Naive thymus-derived CD4-positive, alpha-beta T cell (primary cell): ENCODE measurements at regions of chr10 and their contacts with region 1.

Region 1: GRCh38 chr10:119650692-119651513 is at the start of gene BAG3:
- DNase-seq: peak; percentile 50 to 84 (median 67)
- ATAC-seq: peak; percentile 88
- H3K4me3 ChIP-seq: peak within 1 kb of the TSS; percentile 83
- H3K4me3 Mint-ChIP-seq: peak within 1 kb of the TSS; percentile 93 to 100 (median 97)
- H3K27ac ChIP-seq: peak within 1 kb of the TSS; percentile 93
- H3K27ac Mint-ChIP-seq: peak within 1 kb of the TSS; percentile 91 to 99 (median 97)
- H3K4me1 ChIP-seq: peaks cover 20 to 29% of the 10 kb centered on the region in 2 donors
- H3K4me1 Mint-ChIP-seq: peaks cover 29 to 48% (median 44%) of the 10 kb centered on the region in 7 donors
- H3K27me3 ChIP-seq: no peaks in the 10 kb centered on the region
- H3K27me3 Mint-ChIP-seq: peaks cover 0 to 2% (median 0%) of the 10 kb centered on the region in 5 donors
- total RNA-seq, gene BAG3: 21.9 to 44.5 (median 23.1) TPM

Region 2: DNA sequence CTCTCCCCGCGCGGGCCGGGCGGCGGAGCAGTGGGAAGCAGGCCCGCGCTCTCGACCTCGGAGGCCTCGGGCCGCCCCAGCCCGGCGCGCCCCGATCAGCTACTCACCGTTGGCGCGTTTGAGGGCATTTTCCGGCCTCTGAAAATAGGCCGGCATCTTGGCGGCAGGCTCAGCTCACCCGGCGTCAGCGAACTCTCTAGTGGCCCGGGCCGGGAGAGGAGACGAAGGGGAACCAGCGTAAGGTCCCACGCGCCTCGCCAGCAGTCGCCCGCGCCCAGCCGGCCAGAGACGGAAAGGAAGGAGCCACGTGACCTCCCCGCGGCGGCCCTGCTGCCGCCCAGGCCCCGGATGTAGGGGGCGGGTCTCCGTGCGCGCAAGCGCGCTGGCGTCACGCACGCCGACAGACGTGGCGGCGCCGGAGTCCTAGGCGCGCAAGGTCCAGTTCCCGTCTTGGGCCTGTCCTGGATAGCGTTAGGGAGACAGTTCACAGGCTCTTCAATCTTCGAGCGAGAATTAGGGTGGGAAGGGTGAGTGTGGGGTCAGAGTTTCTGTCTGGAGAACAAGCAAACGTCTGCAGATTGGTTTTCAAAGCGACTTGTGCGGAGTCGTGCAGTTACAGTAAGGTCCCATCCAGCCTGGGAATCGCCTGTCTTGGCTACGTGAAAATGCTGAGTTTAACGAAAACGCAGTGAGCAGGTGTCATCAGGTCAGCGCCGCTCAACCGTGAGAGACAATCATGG is 570.2 kb before region 1 on chr10 and contains the start of gene EIF3A:
- CTCF ChIA-PET with region 1: no interaction called
- POLR2A ChIA-PET with region 1: no interaction called
- intact Hi-C with region 1: loop called (anchors 1 to 5 kb)
- DNase-seq: peak; percentile 87 to 98 (median 93)
- ATAC-seq: peak; percentile 90
- H3K4me3 ChIP-seq: peak within 1 kb of the TSS; percentile 83
- H3K4me3 Mint-ChIP-seq: peak within 1 kb of the TSS; percentile 86 to 99 (median 98)
- H3K27ac ChIP-seq: peak within 1 kb of the TSS; percentile 91
- H3K27ac Mint-ChIP-seq: peak within 1 kb of the TSS; percentile 93 to 100 (median 98)
- H3K4me1 ChIP-seq: peaks cover 6 to 26% of the 10 kb centered on the region in 2 donors
- H3K4me1 Mint-ChIP-seq: peaks cover 28 to 55% (median 45%) of the 10 kb centered on the region in 7 donors
- H3K27me3 ChIP-seq: no peaks in the 10 kb centered on the region
- H3K27me3 Mint-ChIP-seq: peaks cover 0 to 2% (median 0%) of the 10 kb centered on the region in 5 donors
- total RNA-seq, gene EIF3A: 87.8 to 137 (median 96.0) TPM

Region 3: DNA sequence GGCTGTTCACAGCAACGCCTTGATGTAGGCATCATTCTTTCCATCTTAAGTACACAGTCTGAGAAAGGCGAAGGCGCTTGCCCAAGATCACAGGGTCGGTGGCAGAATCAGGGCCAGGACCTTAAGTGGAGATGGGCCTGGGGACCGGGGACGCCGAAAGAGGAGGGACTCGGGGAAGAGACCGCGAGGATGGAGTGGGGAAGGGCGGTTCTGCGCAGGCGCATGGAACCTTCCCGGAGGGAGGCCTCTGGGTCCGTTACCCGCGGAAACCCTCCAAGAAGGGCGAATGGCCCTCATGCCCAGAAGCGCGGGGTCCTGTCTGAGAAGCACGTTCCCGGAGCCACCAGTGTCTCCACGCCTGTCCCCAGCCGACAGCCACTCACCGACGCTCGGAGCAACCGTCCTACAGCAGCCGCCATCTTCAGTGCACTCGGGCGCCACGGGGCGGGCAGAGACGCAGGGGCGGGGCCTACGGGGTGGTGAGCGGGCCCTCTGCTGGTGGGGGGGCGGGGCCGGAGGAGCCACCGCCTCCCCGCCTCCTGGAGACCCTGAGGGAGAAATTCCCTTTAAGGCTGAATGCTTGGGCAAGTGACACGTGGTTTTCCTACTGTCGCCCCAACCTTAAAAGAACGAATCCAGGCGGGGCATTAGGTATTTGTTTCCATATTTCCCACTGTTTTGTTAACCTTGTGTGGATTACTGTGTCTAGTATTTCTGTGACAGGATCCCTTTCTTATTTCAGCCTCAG is 472.4 kb before region 1 on chr10 and contains the start of gene PRDX3:
- CTCF ChIA-PET with region 1: no interaction called
- POLR2A ChIA-PET with region 1: no interaction called
- intact Hi-C with region 1: loop called in 1 of 2 experiments (anchors 1 kb)
- DNase-seq: peak; percentile 81 to 96 (median 89)
- ATAC-seq: peak; percentile 100
- H3K4me3 ChIP-seq: peak within 1 kb of the TSS; percentile 97
- H3K4me3 Mint-ChIP-seq: peak within 1 kb of the TSS; percentile 91 to 99 (median 96)
- H3K27ac ChIP-seq: peak within 1 kb of the TSS; percentile 79
- H3K27ac Mint-ChIP-seq: peak within 1 kb of the TSS; percentile 86 to 98 (median 93)
- H3K4me1 ChIP-seq: peaks cover 7 to 13% of the 10 kb centered on the region in 2 donors
- H3K4me1 Mint-ChIP-seq: peaks cover 13 to 48% (median 36%) of the 10 kb centered on the region in 7 donors
- H3K27me3 ChIP-seq: no peaks in the 10 kb centered on the region
- H3K27me3 Mint-ChIP-seq: no peaks in the 10 kb centered on the region
- total RNA-seq, gene PRDX3: 11.7 to 120 (median 35.4) TPM

Region 4: DNA sequence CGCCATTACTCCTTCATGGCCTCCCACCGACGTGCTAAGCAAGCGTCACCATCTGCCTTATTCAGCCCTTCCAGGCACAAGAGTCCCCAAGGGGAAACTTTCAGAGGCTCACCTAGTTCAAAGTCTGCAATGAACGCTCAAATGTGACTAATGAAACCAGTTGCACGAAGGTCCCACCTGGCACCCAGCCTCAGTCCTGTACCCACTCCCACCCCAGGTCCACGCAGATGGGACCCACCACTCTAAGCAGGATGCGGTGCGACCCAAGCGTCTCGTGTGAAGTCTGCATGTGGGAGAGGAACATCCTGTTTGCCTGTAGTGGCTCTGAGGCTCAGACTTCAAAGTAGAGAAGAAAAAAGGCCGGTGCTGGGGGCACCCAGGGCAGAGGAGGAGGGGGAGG is 148.7 kb before region 1 on chr10:
- CTCF ChIA-PET with region 1: no interaction called
- POLR2A ChIA-PET with region 1: no interaction called
- intact Hi-C with region 1: loop called (anchors 1 to 5 kb)
- DNase-seq: peak; percentile 50 to 93 (median 91)
- ATAC-seq: peak; percentile 91
- H3K4me3 ChIP-seq: peak overlapping the region; percentile 46
- H3K4me3 Mint-ChIP-seq: peak overlapping the region; percentile 70 to 85 (median 82)
- H3K27ac ChIP-seq: peak overlapping the region; percentile 98
- H3K27ac Mint-ChIP-seq: peak overlapping the region; percentile 95 to 100 (median 99)
- H3K4me1 ChIP-seq: peaks cover 39 to 88% of the 10 kb centered on the region in 2 donors
- H3K4me1 Mint-ChIP-seq: peaks cover 56 to 98% (median 92%) of the 10 kb centered on the region in 7 donors
- H3K27me3 ChIP-seq: no peaks in the 10 kb centered on the region
- H3K27me3 Mint-ChIP-seq: no peaks in the 10 kb centered on the region

Region 5: DNA sequence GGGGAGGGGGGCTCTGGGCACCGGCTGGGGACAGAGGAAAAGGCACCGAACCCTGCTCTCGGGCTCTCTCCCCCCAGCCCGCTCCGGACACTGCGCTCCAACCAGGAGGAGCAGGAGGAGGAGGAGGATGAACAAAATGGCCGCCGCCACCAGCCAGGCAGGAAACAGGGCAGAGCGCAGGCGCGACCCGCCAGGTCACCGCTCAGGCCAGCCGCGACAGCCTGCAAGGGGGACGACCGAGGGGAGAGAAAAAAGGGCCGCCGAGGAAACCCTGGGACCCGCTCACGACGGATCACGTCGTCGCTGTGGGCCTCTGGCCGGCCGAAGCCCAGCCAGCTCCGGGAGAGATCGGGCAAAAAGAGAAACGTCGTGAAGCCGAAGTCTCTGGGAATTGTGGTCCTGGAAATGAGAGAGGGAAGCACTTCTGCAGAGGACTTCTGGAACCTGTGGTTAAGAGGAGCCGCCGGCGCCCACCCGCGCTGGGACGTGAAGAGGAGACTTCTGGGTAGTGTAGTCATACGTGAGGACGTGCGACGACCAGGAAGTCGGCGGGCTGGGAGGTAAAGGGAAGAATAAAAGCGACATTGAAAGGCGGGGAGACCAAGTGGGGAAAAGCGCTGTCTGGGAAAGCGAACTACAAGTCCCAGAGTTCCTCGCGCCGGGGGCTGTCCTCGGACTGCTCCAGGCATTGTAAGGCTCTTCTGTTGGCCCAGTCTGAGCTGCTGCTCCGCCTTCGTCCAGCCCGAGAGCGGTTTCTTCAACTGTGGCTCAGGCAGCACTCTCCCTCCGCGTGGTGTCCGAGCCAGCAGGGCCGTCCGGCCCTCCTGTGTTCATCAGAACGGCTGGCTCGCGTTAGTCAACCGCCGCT is 54.1 kb before region 1 on chr10 and contains the start of gene TIAL1:
- CTCF ChIA-PET with region 1: interaction called, 3 read pairs
- POLR2A ChIA-PET with region 1: interaction called, 4 read pairs
- intact Hi-C with region 1: loop called (anchors 1 kb)
- DNase-seq: peak; percentile 73 to 95 (median 89)
- ATAC-seq: peak; percentile 88
- H3K4me3 ChIP-seq: peak within 1 kb of the TSS; percentile 96
- H3K4me3 Mint-ChIP-seq: peak within 1 kb of the TSS; percentile 85 to 99 (median 96)
- H3K27ac ChIP-seq: peak within 1 kb of the TSS; percentile 98
- H3K27ac Mint-ChIP-seq: peak within 1 kb of the TSS; percentile 90 to 99 (median 96)
- H3K4me1 ChIP-seq: peaks cover 28 to 38% of the 10 kb centered on the region in 2 donors
- H3K4me1 Mint-ChIP-seq: peaks cover 35 to 56% (median 48%) of the 10 kb centered on the region in 7 donors
- H3K27me3 ChIP-seq: no peaks in the 10 kb centered on the region
- H3K27me3 Mint-ChIP-seq: no peaks in the 10 kb centered on the region
- total RNA-seq, gene TIAL1: 166 to 228 (median 176) TPM

Region 6: GRCh38 chr10:119663866-119664616 is 13.1 kb after region 1 on chr10:
- CTCF ChIA-PET with region 1: interaction called, 4 read pairs
- POLR2A ChIA-PET with region 1: interaction called, 34 read pairs
- intact Hi-C with region 1: loop called (anchors 1 kb)
- DNase-seq: peak in 6 of 9 donors; percentile 34 to 55 (median 50)
- ATAC-seq: peak; percentile 85
- H3K4me3 ChIP-seq: peak overlapping the region; percentile 7
- H3K4me3 Mint-ChIP-seq: peak overlapping the region; percentile 53 to 79 (median 70)
- H3K27ac ChIP-seq: peak overlapping the region; percentile 65
- H3K27ac Mint-ChIP-seq: peak overlapping the region; percentile 83 to 96 (median 89)
- H3K4me1 ChIP-seq: peaks cover 15 to 37% of the 10 kb centered on the region in 2 donors
- H3K4me1 Mint-ChIP-seq: peaks cover 40 to 93% (median 84%) of the 10 kb centered on the region in 7 donors
- H3K27me3 ChIP-seq: no peaks in the 10 kb centered on the region
- H3K27me3 Mint-ChIP-seq: no peaks in the 10 kb centered on the region

Region 7: DNA sequence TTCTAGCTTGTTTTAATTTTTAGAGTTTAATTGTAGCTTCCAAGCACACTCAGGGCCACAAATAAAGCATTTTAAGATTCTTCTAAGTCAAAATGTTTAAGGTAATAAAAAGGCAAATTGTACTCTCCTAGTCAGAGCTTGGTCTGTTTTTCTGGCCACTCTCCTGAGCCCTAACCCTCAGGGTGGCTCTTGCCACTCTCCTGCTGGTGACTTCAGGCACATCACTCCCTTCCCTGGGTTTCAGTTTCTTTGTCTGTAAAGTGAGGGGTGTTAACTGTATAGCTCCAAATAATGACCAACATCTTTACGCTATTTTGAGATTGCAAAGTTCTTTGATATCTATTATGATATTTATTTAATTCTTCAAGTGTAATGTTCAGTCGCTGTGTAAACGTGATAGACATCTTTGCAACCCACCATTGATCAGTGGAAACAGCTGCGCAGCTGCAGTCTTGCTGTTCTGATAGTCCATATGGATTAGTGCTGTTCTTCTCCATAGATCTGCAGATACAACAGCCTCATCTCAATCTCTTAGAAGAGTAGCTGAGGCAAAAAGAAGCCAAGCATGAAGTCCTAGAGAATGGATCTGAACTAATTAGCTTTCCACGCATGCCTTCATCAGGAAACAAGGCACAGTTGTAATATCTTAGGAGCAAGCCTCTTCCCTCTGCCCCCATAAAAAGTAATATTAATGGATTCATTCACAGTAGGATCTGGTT is 996.0 kb after region 1 on chr10:
- CTCF ChIA-PET with region 1: no interaction called
- POLR2A ChIA-PET with region 1: no interaction called
- intact Hi-C with region 1: no loop called
- DNase-seq: no peak
- ATAC-seq: no peak
- H3K4me3 ChIP-seq: no peak overlapping the region
- H3K4me3 Mint-ChIP-seq: no peak overlapping the region
- H3K27ac ChIP-seq: no peak overlapping the region
- H3K27ac Mint-ChIP-seq: no peak overlapping the region
- H3K4me1 ChIP-seq: no peaks in the 10 kb centered on the region
- H3K4me1 Mint-ChIP-seq: peaks cover 0 to 2% (median 0%) of the 10 kb centered on the region in 7 donors
- H3K27me3 ChIP-seq: no peaks in the 10 kb centered on the region
- H3K27me3 Mint-ChIP-seq: peaks cover 0 to 14% (median 0%) of the 10 kb centered on the region in 5 donors